GM12878 (cell line): ENCODE measurements at regions of chr9 and their contacts with region 1.

Region 1: GRCh38 chr9:10855852-10856251 is 243.1 kb upstream of the PTPRD start:
- DNase-seq: no peak
- ATAC-seq: no peak
- H3K4me3 ChIP-seq: no peak overlapping the region
- H3K27ac ChIP-seq: no peak overlapping the region
- H3K4me1 ChIP-seq: no peaks in the 10 kb centered on the region
- H3K27me3 ChIP-seq: no peaks in the 10 kb centered on the region
- CTCF ChIP-seq: no peak; a peak in 1 of 6 replicates
- EP300 ChIP-seq: no peak
- POLR2A ChIP-seq: no peak
- RAD21 ChIP-seq: no peak

Region 2: GRCh38 chr9:11319538-11319937 is 463.7 kb after region 1 on chr9:
- CTCF ChIA-PET with region 1: interaction called, 27 read pairs
- POLR2A ChIA-PET with region 1: no interaction called
- RAD21 ChIA-PET with region 1: interaction called, 10 read pairs
- SMC1A ChIA-PET with region 1: interaction called, 16 read pairs
- in situ Hi-C with region 1: no loop called
- intact Hi-C with region 1: no loop called
- DNase-seq: no peak
- ATAC-seq: peak; percentile 69
- H3K4me3 ChIP-seq: no peak overlapping the region
- H3K27ac ChIP-seq: no peak overlapping the region
- H3K4me1 ChIP-seq: no peaks in the 10 kb centered on the region
- H3K27me3 ChIP-seq: no peaks in the 10 kb centered on the region
- CTCF ChIP-seq: peak; percentile 25 to 53 (median 34); a peak in 4 of 6 replicates
- EP300 ChIP-seq: no peak
- POLR2A ChIP-seq: no peak
- RAD21 ChIP-seq: peak; percentile 40